PC-3 (cell line): ENCODE measurements at regions of chr18 and their contacts with region 1.

Region 1: GRCh38 chr18:31010601-31011000 is 31.9 kb downstream of the DSC3 start:
- DNase-seq: no peak
- ATAC-seq: no peak
- H3K4me3 ChIP-seq: no peak overlapping the region
- H3K27ac ChIP-seq: peak overlapping the region; percentile 53
- H3K4me1 ChIP-seq: peaks cover 19% of the 10 kb centered on the region
- H3K27me3 ChIP-seq: no peaks in the 10 kb centered on the region
- CTCF ChIP-seq: no peak

Region 2: GRCh38 chr18:30971338-30971956 is 39.2 kb before region 1 on chr18:
- CTCF ChIA-PET with region 1: no interaction called
- POLR2A ChIA-PET with region 1: no interaction called
- intact Hi-C with region 1: no loop called
- DNase-seq: peak; percentile 81
- ATAC-seq: no peak
- H3K4me3 ChIP-seq: no peak overlapping the region
- H3K27ac ChIP-seq: no peak overlapping the region
- H3K4me1 ChIP-seq: no peaks in the 10 kb centered on the region
- H3K27me3 ChIP-seq: no peaks in the 10 kb centered on the region
- CTCF ChIP-seq: peak; percentile 70

Region 3: DNA sequence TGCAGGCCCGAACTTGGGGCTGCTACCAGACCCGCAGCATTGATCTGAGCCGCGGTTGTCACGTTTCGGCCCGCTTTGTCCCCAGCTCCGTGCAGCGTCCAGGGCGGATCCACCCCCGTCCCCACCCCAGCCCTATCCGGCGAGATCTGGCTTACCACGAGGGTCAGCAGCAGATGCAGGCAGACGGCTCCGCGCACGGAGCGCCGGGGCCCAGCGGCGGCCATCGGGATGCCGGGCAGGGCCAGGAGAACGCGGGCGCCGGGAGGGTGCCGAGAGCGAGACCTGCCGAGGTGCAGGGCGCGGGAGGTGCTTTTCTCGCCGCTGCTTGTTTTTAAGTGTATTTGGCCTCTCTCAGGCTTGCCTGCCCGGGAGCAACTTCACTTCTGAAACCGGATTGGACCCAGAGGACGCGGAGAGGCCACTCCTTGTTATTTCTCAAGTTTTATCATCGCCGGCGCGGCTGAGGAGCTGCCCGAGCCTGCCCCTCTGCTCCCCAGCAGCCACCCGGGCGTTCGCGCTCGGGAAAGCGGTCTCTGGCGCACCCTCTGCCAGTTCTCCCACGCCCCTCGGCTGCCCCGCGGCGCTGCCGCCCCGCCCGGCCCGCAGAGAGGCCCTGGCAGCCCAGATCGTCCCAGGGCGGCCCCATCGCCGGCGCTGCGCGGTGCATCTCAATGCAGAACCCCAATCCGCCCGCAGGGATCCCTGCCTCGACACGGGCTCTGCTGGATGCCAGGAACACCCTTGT is 32.0 kb after region 1 on chr18 and contains the start of gene DSC3:
- CTCF ChIA-PET with region 1: no interaction called
- POLR2A ChIA-PET with region 1: no interaction called
- intact Hi-C with region 1: loop called (anchors 1 kb)
- DNase-seq: peak; percentile 61
- ATAC-seq: peak; percentile 51
- H3K4me3 ChIP-seq: peak within 1 kb of the TSS; percentile 77
- H3K27ac ChIP-seq: peak within 1 kb of the TSS; percentile 63
- H3K4me1 ChIP-seq: peaks cover 40% of the 10 kb centered on the region
- H3K27me3 ChIP-seq: no peaks in the 10 kb centered on the region
- CTCF ChIP-seq: no peak
- total RNA-seq, gene DSC3: 11.1 and 14.6 TPM in 2 replicates

Region 4: GRCh38 chr18:31241900-31242409 is 231.4 kb after region 1 on chr18:
- CTCF ChIA-PET with region 1: no interaction called
- POLR2A ChIA-PET with region 1: no interaction called
- intact Hi-C with region 1: loop called (anchors 1 kb)
- DNase-seq: peak; percentile 85
- ATAC-seq: peak; percentile 93
- H3K4me3 ChIP-seq: peak overlapping the region; percentile 44; the same call in 1 of the 2 replicates
- H3K27ac ChIP-seq: peak overlapping the region; percentile 90
- H3K4me1 ChIP-seq: peaks cover 35% of the 10 kb centered on the region
- H3K27me3 ChIP-seq: no peaks in the 10 kb centered on the region
- CTCF ChIP-seq: peak; percentile 64; the same call in 1 of the 2 replicates

Region 5: GRCh38 chr18:31399306-31400032 is 388.9 kb after region 1 on chr18:
- CTCF ChIA-PET with region 1: no interaction called
- POLR2A ChIA-PET with region 1: no interaction called
- intact Hi-C with region 1: loop called (anchors 10 kb)
- DNase-seq: peak; percentile 65
- ATAC-seq: peak; percentile 73
- H3K4me3 ChIP-seq: no peak overlapping the region
- H3K27ac ChIP-seq: peak overlapping the region; percentile 62
- H3K4me1 ChIP-seq: peaks cover 28% of the 10 kb centered on the region
- H3K27me3 ChIP-seq: no peaks in the 10 kb centered on the region
- CTCF ChIP-seq: no peak